Posterior vena cava (tissue), 2 donors: ENCODE measurements at regions of chr11 and their contacts with region 1.

Region 1: DNA sequence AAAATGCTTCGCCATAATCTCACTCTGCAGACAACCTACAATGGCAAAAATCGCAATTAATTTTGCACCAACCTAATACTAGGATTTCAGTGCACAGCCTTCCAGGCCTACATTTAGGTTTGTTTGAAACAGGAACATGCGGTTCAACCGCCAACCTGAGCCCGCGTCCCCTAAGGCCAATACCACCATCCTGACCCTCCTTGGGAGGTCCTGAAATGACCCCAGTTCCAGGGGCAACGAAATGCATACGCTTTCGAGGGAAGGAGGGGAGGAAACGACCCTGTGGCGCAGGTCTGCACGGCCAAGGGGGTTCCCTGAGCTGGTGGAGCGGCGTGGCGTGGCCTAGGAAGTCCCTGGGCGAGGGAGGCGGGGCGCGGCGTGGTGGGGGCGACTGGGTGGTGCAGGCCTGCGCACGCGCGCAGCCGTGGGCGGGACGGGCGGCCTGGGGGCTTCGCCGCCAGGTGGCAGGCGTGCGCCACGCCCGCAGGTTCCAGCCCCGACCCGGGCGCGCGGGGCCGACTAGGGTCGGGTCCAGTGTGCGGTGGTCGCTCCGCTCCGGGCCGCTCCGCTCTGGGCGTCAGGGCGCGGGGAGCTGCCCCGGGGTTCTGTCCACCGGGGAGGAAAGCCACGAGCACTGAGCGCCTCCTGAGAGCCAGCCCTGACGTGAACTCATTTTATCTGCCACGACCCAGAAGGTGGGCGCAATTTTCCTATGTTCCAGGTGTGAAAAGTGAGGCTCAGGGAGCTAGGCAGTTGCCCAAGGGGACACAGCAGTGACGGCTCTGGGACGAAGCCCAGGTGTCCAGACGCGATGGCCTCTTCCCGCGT is 94.1 kb downstream of the SWAP70 start:
- DNase-seq: peak; percentile 96

Region 2: DNA sequence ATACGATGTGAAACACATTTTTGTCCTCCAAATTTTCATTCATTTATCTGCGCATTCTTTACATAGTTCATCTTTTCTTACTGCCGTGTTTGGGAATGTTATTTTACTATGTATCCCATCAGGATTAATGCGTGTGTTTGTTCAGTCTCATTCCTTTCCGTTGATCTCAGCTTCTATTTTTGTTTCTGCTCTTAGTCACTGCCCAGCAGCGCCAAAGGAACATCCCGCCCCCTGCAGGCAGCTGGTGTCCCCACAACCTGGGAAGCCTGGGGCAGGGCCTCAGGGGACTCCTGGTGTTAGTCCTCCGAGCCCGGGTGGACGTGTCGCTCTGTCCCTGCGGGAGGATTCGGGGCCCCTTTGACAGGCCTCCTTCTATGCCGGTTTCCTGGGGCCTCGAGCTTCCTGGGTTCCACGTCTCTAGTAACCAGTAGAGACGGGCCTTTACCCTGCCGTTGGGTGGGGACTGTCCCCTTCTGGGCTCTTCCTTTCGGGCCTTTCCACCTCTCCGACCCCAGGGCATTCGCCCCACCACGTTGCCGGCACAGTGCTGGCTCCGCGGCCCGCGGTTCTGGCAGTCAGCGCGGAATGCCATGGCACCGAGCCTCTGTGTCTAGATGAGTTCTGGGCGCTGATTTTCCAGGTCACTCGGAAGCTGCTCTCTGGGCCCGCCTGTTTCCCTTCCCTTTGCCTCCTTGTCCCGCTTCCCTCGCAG is 144.7 kb before region 1 on chr11:
- intact Hi-C with region 1: loop called in 1 of 2 experiments (anchors 10 kb)
- DNase-seq: peak; percentile 98

Region 3: DNA sequence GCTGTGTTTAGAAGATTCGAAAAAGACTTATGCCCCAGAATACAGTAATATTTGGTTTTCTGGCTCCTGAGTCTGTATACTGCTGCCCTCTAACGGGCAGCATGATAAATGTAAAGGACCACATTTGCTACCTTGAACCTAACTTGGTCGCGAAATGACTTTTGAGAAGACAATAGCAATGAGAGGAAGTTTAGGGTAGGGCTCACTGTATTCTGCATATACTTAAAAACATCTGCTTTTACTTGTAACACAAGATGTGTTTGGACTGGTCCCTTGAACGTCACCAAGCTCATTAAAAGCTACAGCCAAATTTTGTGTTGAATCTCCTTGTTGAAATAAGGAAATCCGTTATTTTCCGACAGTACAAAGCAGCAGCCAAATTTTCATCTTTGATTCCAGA is 215.0 kb after region 1 on chr11:
- intact Hi-C with region 1: loop called (anchors 5 kb)
- DNase-seq: no peak

Region 4: GRCh38 chr11:10322830-10323792 is 565.1 kb after region 1 on chr11:
- intact Hi-C with region 1: loop called in 1 of 2 experiments (anchors 5 kb)
- DNase-seq: no peak

Region 5: DNA sequence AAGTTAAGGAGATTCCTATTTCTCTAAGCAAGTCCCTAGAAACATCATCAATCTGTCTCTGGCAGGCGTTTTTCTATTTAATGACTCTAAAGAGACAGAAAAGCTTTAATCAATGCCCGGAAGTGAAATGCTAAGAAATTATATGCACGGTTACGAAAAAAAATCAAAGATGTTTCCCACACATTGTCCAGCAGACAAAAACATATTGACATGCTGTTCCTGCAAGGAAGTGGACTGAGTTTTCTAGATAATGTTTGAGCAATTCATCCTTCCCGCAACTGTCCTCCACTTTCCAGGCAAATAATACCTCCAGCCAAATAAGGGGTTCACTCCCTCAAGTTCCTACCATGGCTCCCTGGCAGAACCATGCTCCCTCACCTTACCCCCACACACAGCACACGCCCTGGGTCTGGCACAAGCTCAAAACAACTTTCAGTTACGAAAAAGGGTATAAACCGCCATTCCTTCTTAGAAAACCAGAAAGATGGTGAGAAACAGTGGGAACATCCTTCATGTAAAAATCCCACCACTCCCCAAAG is 1834.2 kb after region 1 on chr11:
- intact Hi-C with region 1: loop called in 1 of 2 experiments (anchors 10 kb)
- DNase-seq: no peak